ENCODE measurements at regions of chr4 and their contacts with region 1.

Region 1: DNA sequence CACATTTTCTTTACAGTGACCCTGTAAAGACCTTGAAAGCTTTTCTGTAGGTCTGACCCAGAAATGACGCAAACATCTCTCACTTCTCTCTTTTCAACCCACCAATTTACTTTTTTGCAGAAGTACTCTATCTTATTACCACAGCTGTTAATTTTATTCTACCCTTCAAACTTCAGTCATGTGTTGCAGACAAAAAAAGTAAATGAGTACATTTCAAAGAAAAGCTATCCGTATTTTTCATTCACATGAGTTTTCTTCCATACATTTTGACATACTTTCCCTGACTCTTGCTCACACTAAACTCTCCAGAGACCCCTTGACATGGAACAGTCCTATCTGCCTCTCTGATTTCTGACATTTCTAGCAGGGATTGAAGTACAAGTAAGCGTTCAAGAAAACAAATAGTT is 51.7 kb downstream of the SLC7A11 start:
- DNase-seq: no peak
- ATAC-seq: no peak
- H3K4me3 ChIP-seq: no peak overlapping the region
- H3K27ac ChIP-seq: no peak overlapping the region
- H3K4me1 ChIP-seq: peaks cover 14% of the 10 kb centered on the region
- H3K27me3 ChIP-seq: no peaks in the 10 kb centered on the region
- CTCF ChIP-seq: no peak

Region 2: GRCh38 chr4:137923494-137923893 is 267.0 kb before region 1 on chr4:
- CTCF ChIA-PET with region 1: no interaction called
- POLR2A ChIA-PET with region 1: no interaction called
- intact Hi-C with region 1: no loop called
- DNase-seq: no peak
- ATAC-seq: no peak
- H3K4me3 ChIP-seq: no peak overlapping the region
- H3K27ac ChIP-seq: no peak overlapping the region
- H3K4me1 ChIP-seq: no peaks in the 10 kb centered on the region
- H3K27me3 ChIP-seq: no peaks in the 10 kb centered on the region
- CTCF ChIP-seq: no peak

Region 3: DNA sequence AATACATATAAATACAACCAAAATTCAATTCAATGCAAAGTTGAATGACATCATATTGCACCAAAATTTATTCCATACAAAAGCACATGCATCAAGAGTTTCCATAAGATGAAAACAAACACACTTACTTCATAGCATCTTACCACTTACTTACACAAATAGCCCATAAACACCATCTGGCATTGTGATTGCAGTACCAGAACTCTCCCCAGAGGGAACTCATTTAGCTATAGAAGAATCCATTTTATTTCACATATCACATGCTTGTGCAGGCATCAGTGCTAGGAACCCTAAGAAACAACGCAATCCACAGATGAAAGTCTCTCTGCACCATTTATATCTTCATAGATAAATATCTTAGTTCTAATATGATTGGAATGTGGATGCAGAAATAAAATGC is 26.2 kb before region 1 on chr4:
- CTCF ChIA-PET with region 1: no interaction called
- POLR2A ChIA-PET with region 1: no interaction called
- intact Hi-C with region 1: no loop called
- DNase-seq: no peak
- ATAC-seq: no peak
- H3K4me3 ChIP-seq: no peak overlapping the region
- H3K27ac ChIP-seq: no peak overlapping the region
- H3K4me1 ChIP-seq: peaks cover 1% of the 10 kb centered on the region; the same call in 1 of the 2 replicates
- H3K27me3 ChIP-seq: no peaks in the 10 kb centered on the region
- CTCF ChIP-seq: no peak

Region 4: DNA sequence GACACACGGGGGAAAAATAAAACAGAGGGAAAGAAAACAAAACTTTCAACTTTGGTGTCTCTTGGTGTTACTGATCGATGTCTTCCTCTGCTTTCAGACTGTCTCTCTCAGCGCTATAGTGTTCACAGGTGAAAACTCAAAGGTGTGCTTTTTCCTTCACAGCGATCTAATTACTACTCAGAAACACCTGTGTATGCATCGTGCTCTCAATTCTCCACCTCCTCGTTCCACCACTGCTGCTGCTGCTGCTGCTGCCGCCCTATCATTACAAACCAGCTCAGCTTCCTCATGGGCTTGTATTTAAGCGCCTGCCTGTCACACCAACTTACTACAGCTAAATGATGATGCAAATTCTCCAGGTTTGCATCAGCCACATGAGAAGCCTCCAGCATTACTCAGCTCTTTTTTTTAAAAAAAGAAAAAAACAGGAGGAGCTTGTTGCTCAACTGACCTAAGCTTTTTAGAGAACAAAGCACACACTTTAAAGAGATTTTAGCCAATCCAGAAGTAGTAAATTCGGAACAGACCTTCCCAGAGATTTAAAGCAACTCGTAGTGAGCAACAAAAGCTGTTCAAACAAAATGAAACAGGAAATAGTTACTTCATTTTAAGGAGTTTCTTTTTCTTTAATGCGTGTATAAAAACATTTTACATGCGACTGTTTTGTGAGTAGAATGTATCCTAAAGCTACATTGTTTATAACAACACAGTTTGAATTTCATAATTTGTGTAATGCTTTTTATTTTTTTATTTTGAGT is 51.8 kb after region 1 on chr4 and contains the start of gene SLC7A11:
- CTCF ChIA-PET with region 1: no interaction called
- POLR2A ChIA-PET with region 1: no interaction called
- intact Hi-C with region 1: no loop called
- DNase-seq: peak; percentile 93
- ATAC-seq: peak; percentile 83
- H3K4me3 ChIP-seq: peak within 1 kb of the TSS; percentile 91
- H3K27ac ChIP-seq: peak within 1 kb of the TSS; percentile 91
- H3K4me1 ChIP-seq: peaks cover 25% of the 10 kb centered on the region
- H3K27me3 ChIP-seq: no peaks in the 10 kb centered on the region
- CTCF ChIP-seq: no peak
- total RNA-seq, gene SLC7A11: 13.3 and 14.0 TPM in 2 replicates

Region 5: DNA sequence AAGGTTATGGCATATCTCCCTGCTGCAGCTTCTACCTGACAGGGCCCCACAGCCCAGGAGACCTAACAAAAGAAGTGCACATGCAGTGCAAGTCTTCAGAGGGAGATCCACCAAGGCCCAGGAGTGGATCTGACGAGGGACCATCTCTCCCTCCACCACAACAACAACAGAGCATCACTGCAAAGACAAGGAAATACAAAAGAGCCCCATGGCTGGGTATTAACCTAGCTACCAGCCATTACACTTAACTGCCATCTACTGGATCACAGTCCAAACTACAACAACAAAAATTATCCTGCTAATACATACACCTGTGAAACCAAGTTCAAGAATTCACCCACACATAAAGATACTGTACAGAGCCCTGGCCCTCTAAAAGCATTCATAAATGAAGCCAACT is 331.9 kb after region 1 on chr4:
- CTCF ChIA-PET with region 1: no interaction called
- POLR2A ChIA-PET with region 1: no interaction called
- intact Hi-C with region 1: loop called (anchors 5 kb)
- DNase-seq: peak; percentile 61
- ATAC-seq: peak; percentile 79
- H3K4me3 ChIP-seq: no peak overlapping the region
- H3K27ac ChIP-seq: no peak overlapping the region
- H3K4me1 ChIP-seq: no peaks in the 10 kb centered on the region
- H3K27me3 ChIP-seq: no peaks in the 10 kb centered on the region
- CTCF ChIP-seq: peak; percentile 65

Measured in PC-3 (cell line).